ENCODE measurements at regions of chr11 and their contacts with region 1.

Region 1: DNA sequence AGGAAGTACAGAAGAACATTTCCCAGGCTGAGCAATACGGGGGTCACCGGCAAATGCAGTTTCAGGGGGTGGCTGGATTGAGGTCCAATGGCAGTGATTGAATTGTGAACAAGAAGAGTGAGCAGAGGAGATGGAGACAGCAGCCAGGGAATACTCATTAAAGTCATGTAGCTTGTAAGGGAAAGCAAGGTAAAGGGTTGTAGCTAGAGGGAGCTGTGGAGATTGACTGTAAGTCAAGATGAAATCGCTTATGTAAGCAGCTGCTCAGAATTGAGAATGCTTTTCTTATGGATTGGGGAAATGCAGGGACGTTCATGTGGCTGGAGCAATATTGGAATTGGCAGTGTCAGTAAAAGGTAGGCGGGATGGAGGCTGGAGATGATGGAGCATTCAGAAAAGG is 111.4 kb upstream of the TBCEL start:
- DNase-seq: peak; percentile 41
- H3K4me3 Mint-ChIP-seq: no peak overlapping the region
- H3K27ac Mint-ChIP-seq: no peak overlapping the region
- H3K4me1 Mint-ChIP-seq: no peaks in the 10 kb centered on the region
- H3K27me3 Mint-ChIP-seq: peaks cover 54% of the 10 kb centered on the region
- CTCF ChIP-seq: no peak

Region 2: GRCh38 chr11:120991830-120992686 is 79.6 kb after region 1 on chr11:
- CTCF ChIA-PET with region 1: no interaction called
- POLR2A ChIA-PET with region 1: no interaction called
- intact Hi-C with region 1: no loop called
- DNase-seq: no peak
- H3K4me3 Mint-ChIP-seq: no peak overlapping the region
- H3K27ac Mint-ChIP-seq: no peak overlapping the region
- H3K4me1 Mint-ChIP-seq: no peaks in the 10 kb centered on the region
- H3K27me3 Mint-ChIP-seq: peaks cover 40% of the 10 kb centered on the region
- CTCF ChIP-seq: no peak

Region 3: DNA sequence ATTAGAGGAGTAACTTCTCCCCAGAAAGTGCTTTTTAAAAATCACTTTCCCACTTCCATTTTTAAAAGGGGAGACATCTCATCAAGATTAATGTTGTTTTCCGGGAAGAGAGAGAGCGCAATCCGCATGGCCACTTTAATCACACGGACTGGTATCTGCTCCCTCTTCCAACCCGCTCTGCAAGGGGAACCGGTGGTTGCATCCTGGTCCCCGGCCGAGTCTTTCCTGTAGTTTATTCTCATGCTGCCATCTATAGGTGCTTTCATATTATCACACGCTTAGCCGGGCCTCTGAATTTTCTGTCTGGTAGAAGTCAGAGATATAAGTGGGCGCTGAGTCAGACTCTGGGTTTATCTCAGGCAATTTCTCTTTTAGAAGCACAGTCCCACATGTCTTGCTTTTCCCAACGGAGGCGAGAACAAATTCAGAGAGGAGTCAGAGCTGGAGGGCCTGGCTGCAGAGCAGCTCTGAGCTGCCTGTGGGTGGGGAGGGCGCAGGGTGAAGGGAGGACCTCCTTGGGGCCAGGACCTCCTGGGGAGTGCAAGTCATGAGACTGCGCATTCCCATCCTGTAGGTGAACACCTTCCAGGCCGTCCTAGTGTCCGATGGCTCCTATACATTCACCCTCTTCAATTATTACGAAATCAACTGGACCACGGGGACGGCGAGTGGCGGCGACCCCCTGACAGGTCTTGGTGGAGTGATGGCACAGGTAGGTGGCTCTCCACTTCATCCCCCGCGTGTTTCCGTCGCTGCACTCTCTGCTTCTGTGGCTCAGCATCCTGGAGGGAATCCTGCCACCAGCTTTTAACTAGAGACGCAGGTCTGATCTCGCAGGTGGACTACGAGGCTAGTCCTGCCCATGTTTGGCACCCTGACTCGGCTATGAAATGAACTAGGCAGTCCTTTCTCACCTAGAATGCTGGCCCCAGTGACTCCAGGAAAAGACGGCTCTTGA is 200.3 kb after region 1 on chr11:
- CTCF ChIA-PET with region 1: interaction called, 4 read pairs
- POLR2A ChIA-PET with region 1: no interaction called
- intact Hi-C with region 1: loop called (anchors 5 kb)
- DNase-seq: peak; percentile 59
- H3K4me3 Mint-ChIP-seq: no peak overlapping the region
- H3K27ac Mint-ChIP-seq: no peak overlapping the region
- H3K4me1 Mint-ChIP-seq: no peaks in the 10 kb centered on the region
- H3K27me3 Mint-ChIP-seq: peaks cover 50% of the 10 kb centered on the region
- CTCF ChIP-seq: peak; percentile 48

Region 4: DNA sequence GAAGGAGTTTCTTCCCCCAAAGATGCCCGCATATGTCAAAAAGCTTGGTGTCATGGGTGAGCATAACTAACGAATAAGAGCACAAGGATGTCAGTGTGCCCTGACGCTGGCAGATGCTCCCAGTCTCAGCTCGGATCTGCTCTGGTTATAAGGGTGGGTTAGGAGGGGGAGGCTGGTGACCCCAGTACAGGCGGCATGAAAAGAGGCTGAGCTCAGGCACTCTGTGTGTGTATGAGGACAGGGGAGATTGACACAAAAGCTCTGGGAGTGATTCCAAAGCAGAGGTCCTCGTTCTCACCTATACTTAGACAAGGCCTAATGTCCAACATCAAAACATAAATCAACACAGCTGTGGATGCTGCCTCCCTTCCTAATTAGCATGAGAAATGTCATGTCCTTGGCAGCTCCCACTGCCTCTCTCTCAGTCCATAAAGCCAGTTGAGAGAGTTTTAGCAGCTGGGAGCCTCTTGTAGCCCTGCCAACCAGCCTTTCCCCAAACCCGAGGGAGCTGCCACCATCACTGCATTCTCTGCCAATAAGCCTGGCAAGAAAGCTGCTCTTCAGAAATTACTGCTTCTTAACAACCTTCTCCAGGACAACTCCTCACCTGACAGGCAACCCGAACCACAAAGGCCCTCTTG is 439.9 kb after region 1 on chr11:
- CTCF ChIA-PET with region 1: no interaction called
- POLR2A ChIA-PET with region 1: no interaction called
- intact Hi-C with region 1: no loop called
- DNase-seq: no peak
- H3K4me3 Mint-ChIP-seq: no peak overlapping the region
- H3K27ac Mint-ChIP-seq: no peak overlapping the region
- H3K4me1 Mint-ChIP-seq: peaks cover 11% of the 10 kb centered on the region
- H3K27me3 Mint-ChIP-seq: peaks cover 32% of the 10 kb centered on the region
- CTCF ChIP-seq: no peak